PC-3 (cell line): ENCODE measurements at regions of chr1 and their contacts with region 1.

Region 1: DNA sequence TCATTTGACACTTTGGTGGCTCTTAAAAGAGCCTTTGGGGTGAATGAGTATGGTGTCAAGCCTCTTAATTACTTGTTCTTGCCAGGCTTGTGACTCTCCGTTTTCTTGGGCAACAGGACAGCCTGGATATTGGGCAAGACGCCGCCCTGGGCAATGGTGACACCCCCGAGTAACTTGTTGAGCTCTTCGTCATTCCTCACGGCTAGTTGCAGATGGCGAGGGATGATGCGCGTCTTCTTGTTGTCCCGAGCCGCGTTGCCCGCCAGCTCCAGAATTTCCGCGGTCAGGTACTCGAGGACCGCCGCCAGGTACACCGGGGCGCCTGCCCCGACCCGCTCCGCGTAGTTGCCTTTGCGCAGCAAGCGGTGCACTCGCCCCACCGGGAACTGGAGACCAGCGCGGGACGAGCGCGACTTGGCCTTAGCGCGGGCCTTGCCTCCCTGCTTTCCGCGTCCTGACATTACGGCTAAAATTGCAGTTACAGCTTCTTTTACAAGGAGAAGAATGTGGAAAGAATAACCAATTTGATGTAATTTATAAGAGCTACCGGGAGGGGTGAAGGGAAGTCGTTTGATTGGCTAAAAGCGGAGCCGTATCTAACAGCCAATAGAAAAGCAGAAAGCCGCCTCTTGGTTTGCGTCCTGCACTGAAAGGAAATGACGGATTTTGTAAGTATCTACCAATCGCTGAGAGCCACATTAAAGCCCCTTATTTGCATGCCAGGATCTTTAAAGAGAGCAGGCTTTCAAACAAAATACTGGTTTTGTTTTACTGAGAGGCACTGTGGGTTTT is 11.7 kb upstream of the BOLA1 start:
- DNase-seq: peak; percentile 99
- ATAC-seq: peak; percentile 55
- H3K4me3 ChIP-seq: peak overlapping the region; percentile 77
- H3K27ac ChIP-seq: peak overlapping the region; percentile 93
- H3K4me1 ChIP-seq: peaks cover 27% of the 10 kb centered on the region
- H3K27me3 ChIP-seq: no peaks in the 10 kb centered on the region
- CTCF ChIP-seq: no peak

Region 2: GRCh38 chr1:149937060-149937705 is 49.5 kb after region 1 on chr1:
- CTCF ChIA-PET with region 1: interaction called, 4 read pairs
- POLR2A ChIA-PET with region 1: interaction called, 6 read pairs
- intact Hi-C with region 1: loop called (anchors 1 kb)
- DNase-seq: peak; percentile 96
- ATAC-seq: peak; percentile 71
- H3K4me3 ChIP-seq: peak overlapping the region; percentile 75
- H3K27ac ChIP-seq: peak overlapping the region; percentile 90
- H3K4me1 ChIP-seq: peaks cover 43% of the 10 kb centered on the region
- H3K27me3 ChIP-seq: no peaks in the 10 kb centered on the region
- CTCF ChIP-seq: 0 out of 2 replicates have a peak, but pooled peaks have one; percentile 16

Region 3: GRCh38 chr1:150021191-150021694 is 133.6 kb after region 1 on chr1:
- CTCF ChIA-PET with region 1: no interaction called
- POLR2A ChIA-PET with region 1: no interaction called
- intact Hi-C with region 1: no loop called
- DNase-seq: peak; percentile 61
- ATAC-seq: peak; percentile 69
- H3K4me3 ChIP-seq: no peak overlapping the region; the same call in 1 of the 2 replicates
- H3K27ac ChIP-seq: peak overlapping the region; percentile 8
- H3K4me1 ChIP-seq: peaks cover 16% of the 10 kb centered on the region
- H3K27me3 ChIP-seq: no peaks in the 10 kb centered on the region
- CTCF ChIP-seq: no peak

Region 4: GRCh38 chr1:150067184-150068036 is 179.8 kb after region 1 on chr1 and contains the start of gene VPS45:
- CTCF ChIA-PET with region 1: no interaction called
- POLR2A ChIA-PET with region 1: interaction called, 3 read pairs
- intact Hi-C with region 1: loop called (anchors 1 kb)
- DNase-seq: peak; percentile 94
- ATAC-seq: peak; percentile 95
- H3K4me3 ChIP-seq: peak within 1 kb of the TSS; percentile 87
- H3K27ac ChIP-seq: peak within 1 kb of the TSS; percentile 83
- H3K4me1 ChIP-seq: peaks cover 21% of the 10 kb centered on the region
- H3K27me3 ChIP-seq: no peaks in the 10 kb centered on the region
- CTCF ChIP-seq: peak; percentile 50; the same call in 1 of the 2 replicates
- total RNA-seq, gene VPS45: 39.5 and 47.8 TPM in 2 replicates

Region 5: DNA sequence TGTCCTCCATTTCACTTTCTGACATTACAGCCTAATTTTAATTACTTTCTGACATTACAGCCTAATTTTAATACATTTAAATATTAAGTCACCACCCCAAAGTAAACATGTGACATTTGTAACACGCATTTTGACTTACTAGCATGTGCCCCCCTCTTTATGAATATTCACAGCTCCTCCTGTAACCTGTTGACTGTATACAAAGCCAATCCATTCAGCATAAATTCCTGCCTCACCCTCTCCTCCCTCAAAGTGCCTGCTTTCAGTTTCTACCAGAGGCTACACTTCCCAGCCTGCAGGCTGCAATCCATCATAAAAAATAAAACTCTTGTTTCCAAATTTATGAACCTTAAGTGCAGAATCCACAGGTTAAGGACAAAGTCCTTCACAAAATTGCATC is 308.8 kb after region 1 on chr1:
- CTCF ChIA-PET with region 1: no interaction called
- POLR2A ChIA-PET with region 1: no interaction called
- intact Hi-C with region 1: no loop called
- DNase-seq: no peak
- ATAC-seq: no peak
- H3K4me3 ChIP-seq: no peak overlapping the region
- H3K27ac ChIP-seq: no peak overlapping the region
- H3K4me1 ChIP-seq: peaks cover 8% of the 10 kb centered on the region
- H3K27me3 ChIP-seq: no peaks in the 10 kb centered on the region
- CTCF ChIP-seq: no peak

Region 6: GRCh38 chr1:150243003-150243402 is 355.4 kb after region 1 on chr1:
- CTCF ChIA-PET with region 1: no interaction called
- POLR2A ChIA-PET with region 1: no interaction called
- intact Hi-C with region 1: no loop called
- DNase-seq: no peak
- ATAC-seq: no peak
- H3K4me3 ChIP-seq: no peak overlapping the region
- H3K27ac ChIP-seq: no peak overlapping the region
- H3K4me1 ChIP-seq: no peaks in the 10 kb centered on the region
- H3K27me3 ChIP-seq: no peaks in the 10 kb centered on the region
- CTCF ChIP-seq: no peak